Activated CD4-positive, alpha-beta memory T cell treated with anti-CD3 and anti-CD28 coated beads for 36 hours (primary cell): ENCODE measurements at regions of chr19 and their contacts with region 1.

Region 1: GRCh38 chr19:53792721-53793433 is 31.2 kb downstream of the NLRP12 start:
- DNase-seq: peak; percentile 84
- H3K4me3 Mint-ChIP-seq: no peak overlapping the region
- H3K27ac Mint-ChIP-seq: no peak overlapping the region
- H3K4me1 Mint-ChIP-seq: no peaks in the 10 kb centered on the region
- H3K27me3 Mint-ChIP-seq: no peaks in the 10 kb centered on the region

Region 2: GRCh38 chr19:53772943-53773342 is 19.9 kb before region 1 on chr19:
- CTCF ChIA-PET with region 1: interaction called, 11 read pairs
- POLR2A ChIA-PET with region 1: no interaction called
- intact Hi-C with region 1: no loop called
- DNase-seq: peak; percentile 40
- H3K4me3 Mint-ChIP-seq: no peak overlapping the region
- H3K27ac Mint-ChIP-seq: no peak overlapping the region
- H3K4me1 Mint-ChIP-seq: peaks cover 4% of the 10 kb centered on the region
- H3K27me3 Mint-ChIP-seq: peaks cover 3% of the 10 kb centered on the region

Region 3: GRCh38 chr19:53808710-53809125 is 15.8 kb after region 1 on chr19:
- CTCF ChIA-PET with region 1: interaction called, 10 read pairs
- POLR2A ChIA-PET with region 1: no interaction called
- intact Hi-C with region 1: no loop called
- DNase-seq: no peak
- H3K4me3 Mint-ChIP-seq: no peak overlapping the region
- H3K27ac Mint-ChIP-seq: no peak overlapping the region
- H3K4me1 Mint-ChIP-seq: no peaks in the 10 kb centered on the region
- H3K27me3 Mint-ChIP-seq: no peaks in the 10 kb centered on the region

Region 4: GRCh38 chr19:54023191-54023590 is 230.3 kb after region 1 on chr19:
- CTCF ChIA-PET with region 1: interaction called, 26 read pairs
- POLR2A ChIA-PET with region 1: no interaction called
- intact Hi-C with region 1: loop called (anchors 2 kb)
- DNase-seq: no peak
- H3K4me3 Mint-ChIP-seq: no peak overlapping the region
- H3K27ac Mint-ChIP-seq: no peak overlapping the region
- H3K4me1 Mint-ChIP-seq: peaks cover 4% of the 10 kb centered on the region
- H3K27me3 Mint-ChIP-seq: peaks cover 32% of the 10 kb centered on the region

Region 5: DNA sequence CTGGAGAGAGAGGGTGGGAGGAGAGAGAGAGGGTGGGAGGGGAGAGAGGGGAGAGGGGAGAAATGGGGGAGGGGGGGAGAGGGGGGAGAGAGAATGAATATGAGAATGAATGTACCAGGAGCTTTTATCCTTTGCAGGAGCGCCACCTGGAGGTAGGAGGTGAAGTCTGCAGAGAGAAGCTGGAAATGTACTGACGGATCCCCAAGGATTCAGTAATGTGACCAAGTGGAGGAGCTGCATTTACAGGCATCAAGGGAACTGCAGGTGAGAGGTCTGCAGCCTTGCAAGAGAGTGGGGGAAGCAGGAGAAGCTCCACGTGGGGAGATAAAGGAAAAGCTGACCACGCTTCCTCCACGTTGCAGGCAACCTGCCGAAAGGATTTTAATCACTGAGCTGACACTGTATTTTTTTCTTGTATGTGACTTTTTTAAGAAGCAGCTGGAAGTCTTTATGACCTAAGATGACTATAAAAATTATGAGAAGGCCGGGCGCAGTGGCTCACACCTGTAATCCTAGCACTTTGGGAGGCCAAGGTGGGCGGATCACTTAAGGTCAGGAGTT is 237.1 kb after region 1 on chr19:
- CTCF ChIA-PET with region 1: interaction called, 26 read pairs
- POLR2A ChIA-PET with region 1: no interaction called
- intact Hi-C with region 1: loop called (anchors 2 kb)
- DNase-seq: peak; percentile 67
- H3K4me3 Mint-ChIP-seq: no peak overlapping the region
- H3K27ac Mint-ChIP-seq: no peak overlapping the region
- H3K4me1 Mint-ChIP-seq: no peaks in the 10 kb centered on the region
- H3K27me3 Mint-ChIP-seq: peaks cover 24% of the 10 kb centered on the region